Naive thymus-derived CD4-positive, alpha-beta T cell (primary cell): ENCODE measurements at regions of chr9 and their contacts with region 1.

Region 1: GRCh38 chr9:137459147-137459600 is at the start of gene NSMF:
- DNase-seq: peak; percentile 90 to 99 (median 95)
- ATAC-seq: peak; percentile 89
- H3K4me3 ChIP-seq: peak within 1 kb of the TSS; percentile 67
- H3K4me3 Mint-ChIP-seq: peak within 1 kb of the TSS; percentile 55 to 79 (median 68)
- H3K27ac ChIP-seq: peak within 1 kb of the TSS; percentile 93
- H3K27ac Mint-ChIP-seq: peak within 1 kb of the TSS; percentile 28 to 98 (median 91)
- H3K4me1 ChIP-seq: peaks cover 36 to 54% of the 10 kb centered on the region in 2 donors
- H3K4me1 Mint-ChIP-seq: peaks cover 0 to 55% (median 33%) of the 10 kb centered on the region in 7 donors
- H3K27me3 ChIP-seq: no peaks in the 10 kb centered on the region
- H3K27me3 Mint-ChIP-seq: no peaks in the 10 kb centered on the region
- total RNA-seq, gene NSMF: 22.9 to 92.0 (median 57.3) TPM

Region 2: DNA sequence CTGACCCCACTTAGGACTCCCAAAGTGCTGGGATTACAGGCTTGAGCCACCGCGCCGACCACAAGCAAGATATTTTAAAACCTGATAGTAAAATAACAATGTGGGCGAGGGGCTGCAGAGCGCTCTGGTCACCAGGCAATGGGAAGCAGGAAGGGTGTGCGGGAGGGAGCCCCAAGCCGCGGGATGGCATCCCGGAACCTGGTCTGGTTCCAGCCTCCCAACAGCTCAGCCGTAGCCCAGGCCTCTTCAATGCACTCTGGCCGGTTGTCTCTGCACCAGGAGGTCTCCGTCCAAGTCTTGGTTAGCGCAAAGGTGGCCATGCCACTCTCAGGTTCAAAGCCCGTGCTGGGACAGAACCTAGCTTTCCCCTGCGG is 382.6 kb before region 1 on chr9:
- CTCF ChIA-PET with region 1: no interaction called
- POLR2A ChIA-PET with region 1: no interaction called
- intact Hi-C with region 1: no loop called
- DNase-seq: no peak
- ATAC-seq: no peak
- H3K4me3 ChIP-seq: no peak overlapping the region
- H3K4me3 Mint-ChIP-seq: peak overlapping the region; percentile 25 to 80 (median 66)
- H3K27ac ChIP-seq: peak overlapping the region; percentile 10
- H3K27ac Mint-ChIP-seq: peak overlapping the region in 2 of 9 donors; percentile 28 to 38
- H3K4me1 ChIP-seq: peaks cover 6 to 8% of the 10 kb centered on the region in 2 donors
- H3K4me1 Mint-ChIP-seq: peaks cover 0 to 19% (median 0%) of the 10 kb centered on the region in 7 donors
- H3K27me3 ChIP-seq: no peaks in the 10 kb centered on the region
- H3K27me3 Mint-ChIP-seq: no peaks in the 10 kb centered on the region

Region 3: DNA sequence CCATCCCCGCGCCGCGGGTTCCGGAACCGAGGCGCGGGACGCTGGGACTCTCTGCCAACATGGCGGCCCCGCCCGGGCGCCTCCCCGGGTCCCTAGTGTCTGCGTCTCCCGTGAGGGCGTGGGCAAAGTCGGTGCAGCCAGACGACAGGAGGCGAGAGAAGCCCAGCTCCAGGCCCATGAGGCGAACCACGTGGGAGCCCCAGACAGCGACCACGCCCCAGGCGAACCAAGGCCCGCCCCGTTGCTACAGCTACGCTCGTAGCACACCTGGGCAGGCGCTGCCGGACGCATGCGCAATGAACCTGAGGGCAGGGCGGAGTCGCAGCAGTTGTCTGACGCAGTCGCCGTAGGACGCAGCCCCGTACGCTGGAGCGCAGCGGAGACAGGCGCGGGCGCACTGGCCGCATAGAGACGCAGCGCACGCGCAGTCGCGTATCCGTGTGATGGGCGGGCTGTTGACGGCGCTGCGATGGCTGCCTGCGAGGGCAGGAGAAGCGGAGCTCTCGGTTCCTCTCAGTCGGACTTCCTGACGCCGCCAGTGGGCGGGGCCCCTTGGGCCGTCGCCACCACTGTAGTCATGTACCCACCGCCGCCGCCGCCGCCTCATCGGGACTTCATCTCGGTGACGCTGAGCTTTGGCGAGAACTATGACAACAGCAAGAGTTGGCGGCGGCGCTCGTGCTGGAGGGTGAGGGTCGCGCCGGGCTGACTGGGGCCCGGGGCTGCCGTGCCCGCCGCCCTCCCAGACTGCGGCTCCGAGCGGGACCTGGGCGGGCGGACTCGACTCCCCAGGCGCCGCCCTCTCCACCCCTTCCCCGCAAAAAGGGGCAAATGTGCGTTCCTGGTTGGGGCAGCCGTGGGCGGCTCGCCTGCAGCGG is 372.4 kb before region 1 on chr9 and contains the start of gene MAN1B1:
- CTCF ChIA-PET with region 1: no interaction called
- POLR2A ChIA-PET with region 1: no interaction called
- intact Hi-C with region 1: no loop called
- DNase-seq: peak; percentile 96 to 100 (median 99)
- ATAC-seq: peak; percentile 92
- H3K4me3 ChIP-seq: peak within 1 kb of the TSS; percentile 73
- H3K4me3 Mint-ChIP-seq: peak within 1 kb of the TSS; percentile 88 to 96 (median 92)
- H3K27ac ChIP-seq: peak within 1 kb of the TSS; percentile 92
- H3K27ac Mint-ChIP-seq: peak within 1 kb of the TSS; percentile 92 to 98 (median 95)
- H3K4me1 ChIP-seq: peaks cover 18% of the 10 kb centered on the region in 2 donors
- H3K4me1 Mint-ChIP-seq: peaks cover 25 to 34% (median 30%) of the 10 kb centered on the region in 7 donors
- H3K27me3 ChIP-seq: no peaks in the 10 kb centered on the region
- H3K27me3 Mint-ChIP-seq: no peaks in the 10 kb centered on the region
- total RNA-seq, gene MAN1B1: 57.3 to 74.2 (median 70.2) TPM

Region 4: DNA sequence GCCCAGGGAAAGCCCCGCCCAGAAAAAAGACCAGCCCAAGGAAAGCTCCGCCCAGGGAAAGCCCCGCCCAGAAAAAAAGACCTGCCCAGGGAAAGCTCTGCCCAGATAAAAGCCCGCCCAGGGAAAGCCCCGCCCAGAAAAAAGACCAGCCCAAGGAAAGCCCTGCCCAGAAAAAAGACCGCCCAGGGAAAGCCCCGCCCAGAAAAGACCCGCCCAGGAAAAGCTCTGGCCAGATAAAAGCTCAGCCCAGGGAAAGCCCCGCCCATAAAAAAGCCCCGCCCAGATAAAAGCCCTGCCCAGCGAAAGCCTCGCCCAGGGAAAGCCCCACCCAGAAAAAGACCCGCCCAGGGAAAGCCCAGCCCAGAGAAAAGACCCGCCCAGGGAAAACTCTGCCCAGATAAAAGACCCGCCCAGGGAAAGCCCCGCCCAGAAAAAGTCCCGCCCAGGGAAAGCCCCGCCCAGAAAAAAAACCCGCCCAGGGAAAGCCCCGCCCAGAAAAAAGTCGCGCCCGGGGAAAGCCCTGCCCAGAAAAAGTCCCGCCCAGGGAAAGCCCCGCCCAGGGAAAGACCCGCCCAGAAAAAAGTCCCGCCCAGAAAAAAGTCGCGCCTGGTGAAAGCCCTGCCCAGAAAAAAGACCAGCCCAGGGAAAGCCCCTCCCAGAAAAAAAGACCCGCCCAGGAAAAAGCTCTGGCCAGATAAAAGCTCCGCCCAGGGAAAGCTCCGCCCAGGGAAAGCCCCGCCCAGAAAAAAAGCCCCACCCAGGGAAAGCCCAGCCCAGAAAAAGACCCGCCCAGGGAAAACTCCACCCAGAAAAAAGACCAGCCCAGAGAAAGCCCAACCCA is 308.3 kb before region 1 on chr9:
- CTCF ChIA-PET with region 1: no interaction called
- POLR2A ChIA-PET with region 1: no interaction called
- intact Hi-C with region 1: no loop called
- DNase-seq: peak in 1 of 9 donors; percentile 68
- ATAC-seq: no peak
- H3K4me3 ChIP-seq: no peak overlapping the region
- H3K4me3 Mint-ChIP-seq: no peak overlapping the region
- H3K27ac ChIP-seq: no peak overlapping the region
- H3K27ac Mint-ChIP-seq: peak overlapping the region in 1 of 9 donors; percentile 65
- H3K4me1 ChIP-seq: no peaks in the 10 kb centered on the region
- H3K4me1 Mint-ChIP-seq: peaks cover 0 to 10% (median 0%) of the 10 kb centered on the region in 7 donors
- H3K27me3 ChIP-seq: peaks cover 0 to 4% of the 10 kb centered on the region in 2 donors
- H3K27me3 Mint-ChIP-seq: peaks cover 7 to 16% (median 12%) of the 10 kb centered on the region in 5 donors

Region 5: DNA sequence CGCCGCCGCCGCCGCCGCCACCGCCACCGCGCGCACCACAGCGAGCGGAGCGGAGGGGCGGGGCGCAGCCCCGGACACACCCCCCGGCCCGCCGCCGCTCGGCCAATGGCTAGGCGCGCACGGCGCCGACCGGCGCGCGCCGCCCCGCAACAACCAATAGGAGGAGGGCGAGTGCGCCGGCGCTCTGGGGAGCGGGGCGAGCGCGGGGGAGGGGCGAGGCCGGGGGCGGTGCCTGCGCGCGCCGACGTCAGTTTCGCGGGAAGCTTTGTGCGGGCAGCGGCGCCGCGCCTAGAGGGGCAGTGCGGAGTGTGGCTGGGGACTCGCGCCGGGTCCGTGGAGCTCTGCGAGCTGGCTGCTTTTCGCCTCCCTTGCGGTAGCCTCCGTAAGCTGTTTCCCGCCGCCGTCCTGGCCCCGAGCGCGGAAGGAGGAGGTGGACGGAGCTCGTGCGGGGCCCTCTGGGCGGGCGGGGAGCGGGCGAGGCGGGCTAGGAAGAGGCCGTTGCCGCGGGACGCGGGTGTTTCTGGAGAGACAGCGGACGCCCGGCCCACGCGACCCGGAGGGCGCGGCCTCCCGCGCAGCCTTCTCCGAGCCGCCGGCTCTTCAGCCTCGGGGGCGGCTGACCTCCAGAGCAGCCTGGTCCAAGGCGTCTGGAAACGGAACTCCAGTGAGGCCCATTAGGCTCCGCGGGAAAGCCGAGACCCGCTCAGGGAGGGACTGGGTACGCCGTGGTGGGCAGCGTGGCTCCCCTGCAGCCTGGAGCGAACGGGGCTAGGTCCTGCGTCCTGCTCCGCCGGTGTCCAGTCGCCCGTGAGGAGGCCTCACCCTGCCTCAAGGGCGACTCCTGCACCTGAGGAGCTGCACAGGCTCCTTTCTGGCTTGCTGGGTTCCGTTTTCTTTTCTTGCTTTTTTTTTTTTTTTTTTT is 131.5 kb after region 1 on chr9 and contains the start of gene ZMYND19:
- CTCF ChIA-PET with region 1: no interaction called
- POLR2A ChIA-PET with region 1: no interaction called
- intact Hi-C with region 1: loop called in 1 of 2 experiments (anchors 5 kb)
- DNase-seq: peak; percentile 84 to 97 (median 92)
- ATAC-seq: peak; percentile 99
- H3K4me3 ChIP-seq: peak within 1 kb of the TSS; percentile 64
- H3K4me3 Mint-ChIP-seq: peak within 1 kb of the TSS; percentile 88 to 96 (median 94)
- H3K27ac ChIP-seq: peak within 1 kb of the TSS; percentile 71
- H3K27ac Mint-ChIP-seq: peak within 1 kb of the TSS in 8 of 9 donors; percentile 69 to 95 (median 90)
- H3K4me1 ChIP-seq: peaks cover 0 to 12% of the 10 kb centered on the region in 2 donors
- H3K4me1 Mint-ChIP-seq: peaks cover 7 to 27% (median 16%) of the 10 kb centered on the region in 7 donors
- H3K27me3 ChIP-seq: no peaks in the 10 kb centered on the region
- H3K27me3 Mint-ChIP-seq: no peaks in the 10 kb centered on the region
- total RNA-seq, gene ZMYND19: 13.3 to 32.4 (median 26.6) TPM